Heart left ventricle (tissue), 16 donors: ENCODE measurements at regions of chr17 and their contacts with region 1.

Region 1: DNA sequence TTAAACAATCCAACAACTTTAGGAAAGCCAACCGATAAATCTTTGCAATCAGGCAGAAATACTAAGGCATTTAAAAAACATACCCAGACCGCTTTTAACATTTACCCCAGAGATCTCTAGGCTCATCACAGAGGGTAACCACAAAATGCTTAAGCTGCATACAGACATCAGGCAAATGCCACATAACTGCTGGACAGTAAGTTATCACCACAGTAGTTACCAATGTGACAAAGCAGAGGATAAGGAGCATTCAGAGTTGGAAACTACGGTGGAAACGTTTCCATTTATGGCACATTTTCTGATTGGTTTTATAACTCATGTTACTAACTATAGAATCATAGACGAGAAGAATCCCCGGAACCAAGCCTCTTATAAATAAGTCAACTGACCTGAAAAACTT is 77.5 kb downstream of the KANSL1 start:
- DNase-seq: no peak
- ATAC-seq: peak; percentile 64 to 86 (median 82)
- H3K4me3 ChIP-seq: peak overlapping the region in 4 of 12 donors; percentile 0 to 14 (median 6)
- H3K27ac ChIP-seq: peak overlapping the region; percentile 17 to 85 (median 73)
- H3K4me1 ChIP-seq: peaks cover 4 to 88% (median 53%) of the 10 kb centered on the region in 12 donors
- H3K27me3 ChIP-seq: no peaks in the 10 kb centered on the region
- CTCF ChIP-seq: no peak
- POLR2A ChIP-seq: no peak

Region 2: DNA sequence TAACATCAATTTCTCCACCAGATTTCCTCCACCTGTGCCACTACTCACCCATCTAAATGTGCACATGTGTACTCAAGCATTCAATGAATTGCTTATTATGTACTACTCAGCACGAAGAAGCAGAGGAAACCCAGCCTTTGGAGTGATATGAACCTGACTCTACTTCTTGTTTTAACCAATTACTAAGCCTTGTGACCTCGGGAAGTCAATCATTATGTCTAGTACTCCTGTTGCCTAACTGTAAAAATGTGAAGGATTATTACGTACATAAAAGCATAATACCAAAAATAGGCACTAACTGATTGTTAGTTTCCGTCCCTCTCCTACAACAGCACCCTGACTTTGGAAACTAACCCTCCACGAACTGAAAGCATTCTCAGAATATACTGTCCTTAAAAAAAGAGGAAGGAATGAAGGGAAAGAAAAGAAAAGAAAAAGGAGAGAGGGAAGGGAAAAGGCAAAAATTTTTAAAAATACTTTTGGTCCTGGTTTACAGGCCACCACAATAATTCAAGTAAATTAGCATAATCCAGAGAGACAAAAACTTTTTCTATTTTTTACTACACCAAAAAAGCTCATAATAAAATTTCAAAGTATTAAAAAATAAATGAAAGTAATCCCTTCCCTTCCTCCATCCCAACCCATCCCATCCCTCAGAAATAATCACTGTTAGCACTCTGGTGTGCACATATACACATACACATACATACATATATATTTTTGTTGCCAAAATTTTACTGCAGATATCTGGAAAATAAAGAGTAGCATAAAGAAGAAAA is 23.9 kb after region 1 on chr17:
- intact Hi-C with region 1: no loop called
- DNase-seq: no peak
- ATAC-seq: peak in 1 of 4 donors; percentile 25
- H3K4me3 ChIP-seq: no peak overlapping the region
- H3K27ac ChIP-seq: peak overlapping the region in 1 of 12 donors; percentile 33
- H3K4me1 ChIP-seq: peaks cover 3 to 96% (median 78%) of the 10 kb centered on the region in 12 donors
- H3K27me3 ChIP-seq: no peaks in the 10 kb centered on the region
- CTCF ChIP-seq: no peak
- POLR2A ChIP-seq: no peak

Region 3: DNA sequence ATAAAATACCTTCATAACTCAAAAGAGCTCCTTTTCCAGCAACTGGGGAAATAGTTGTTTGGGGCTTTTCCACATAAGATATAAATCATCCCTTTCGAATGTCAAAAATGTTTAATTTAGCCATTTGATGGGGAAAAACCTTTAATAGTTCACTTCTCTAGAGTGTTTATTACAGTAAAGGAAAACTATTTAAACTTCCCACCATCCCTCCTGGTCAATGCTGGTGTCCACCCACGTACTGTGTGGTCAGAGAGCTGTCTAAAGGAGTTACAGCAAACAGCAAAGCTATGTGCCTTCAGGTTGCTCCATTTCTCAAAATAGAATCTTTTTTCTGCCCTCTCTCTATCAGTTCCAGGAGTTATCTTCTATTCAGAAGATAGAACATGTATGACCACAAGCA is 44.0 kb after region 1 on chr17:
- intact Hi-C with region 1: loop called in 1 of 10 experiments (anchors 5 kb)
- DNase-seq: no peak
- ATAC-seq: peak in 2 of 4 donors; percentile 33 to 35
- H3K4me3 ChIP-seq: no peak overlapping the region
- H3K27ac ChIP-seq: peak overlapping the region in 1 of 12 donors; percentile 41
- H3K4me1 ChIP-seq: peaks cover 25 to 100% (median 84%) of the 10 kb centered on the region in 12 donors
- H3K27me3 ChIP-seq: no peaks in the 10 kb centered on the region
- CTCF ChIP-seq: no peak
- POLR2A ChIP-seq: no peak

Region 4: DNA sequence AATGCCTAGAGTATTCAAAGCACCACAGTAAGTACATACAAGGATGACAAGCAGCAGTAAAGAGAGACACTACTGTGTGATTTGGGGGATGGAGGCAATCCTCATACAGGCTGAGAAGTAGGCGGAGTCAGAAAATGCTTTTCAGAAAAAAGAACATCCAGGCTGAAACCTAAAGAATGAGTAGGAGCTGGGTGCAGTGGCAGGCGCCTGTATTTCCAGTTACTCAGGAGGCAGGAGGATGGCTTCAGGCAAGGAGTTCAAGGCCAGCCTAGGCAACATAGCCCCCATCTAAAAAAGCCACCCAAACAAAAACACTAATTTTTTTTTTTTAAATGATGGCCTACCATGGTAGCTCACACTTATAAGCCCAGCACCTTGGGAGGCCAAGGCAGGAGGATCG is 67.3 kb after region 1 on chr17:
- intact Hi-C with region 1: loop called in 1 of 10 experiments (anchors 5 kb)
- DNase-seq: no peak
- ATAC-seq: no peak
- H3K4me3 ChIP-seq: no peak overlapping the region
- H3K27ac ChIP-seq: no peak overlapping the region
- H3K4me1 ChIP-seq: peaks cover 0 to 95% (median 88%) of the 10 kb centered on the region in 12 donors
- H3K27me3 ChIP-seq: no peaks in the 10 kb centered on the region
- CTCF ChIP-seq: no peak
- POLR2A ChIP-seq: no peak